Activated B cell treated with CpG ODN at 0.5 μM for 24 hours (primary cell): ENCODE measurements at regions of chr12 and their contacts with region 1.

Region 1: DNA sequence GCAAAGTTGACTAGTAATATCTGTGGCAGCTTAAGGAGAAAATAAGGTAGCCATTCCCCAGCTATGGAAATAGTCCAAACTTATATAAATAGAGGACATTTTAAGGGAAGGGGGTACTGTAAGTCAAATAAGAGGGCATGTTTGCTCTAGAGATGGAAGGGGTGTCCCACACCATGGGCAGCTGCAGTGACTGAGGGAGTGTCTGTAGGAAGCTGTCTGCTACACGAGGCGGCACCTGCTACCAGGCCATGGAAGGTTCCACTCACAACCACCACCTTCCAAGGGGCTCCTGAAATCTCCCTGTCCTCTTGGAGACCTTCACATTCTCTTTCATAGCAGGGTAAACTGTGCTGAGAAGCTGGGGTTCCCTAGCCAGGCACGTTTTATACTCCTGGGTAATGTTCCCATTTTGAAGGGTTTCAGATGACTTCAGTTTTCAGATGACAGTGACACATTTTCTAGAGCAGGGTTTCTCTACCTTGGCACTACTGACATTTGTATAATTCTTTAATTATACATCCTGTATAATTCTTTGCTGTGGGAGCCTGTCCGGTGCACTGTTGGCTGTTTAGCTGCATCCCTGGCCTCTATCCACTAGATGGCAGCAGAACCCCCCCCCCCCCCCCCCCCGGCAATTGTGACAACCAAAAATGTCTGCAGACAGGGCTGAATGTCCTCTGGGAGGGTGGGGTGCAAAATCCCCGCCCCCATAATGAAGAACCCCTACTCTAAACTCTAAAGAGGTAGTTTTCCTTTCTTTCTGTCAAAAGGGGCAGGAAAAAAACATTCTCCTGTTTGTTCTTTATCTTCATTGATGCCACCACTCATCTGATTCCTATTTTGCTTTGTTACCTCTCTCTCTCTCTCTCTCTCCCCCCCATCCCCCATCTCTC is 11.6 kb upstream of the SMCO2 start:
- DNase-seq: no peak
- ATAC-seq: no peak
- H3K4me3 Mint-ChIP-seq: no peak overlapping the region
- H3K27ac Mint-ChIP-seq: no peak overlapping the region
- H3K4me1 Mint-ChIP-seq: peaks cover 20% of the 10 kb centered on the region
- H3K27me3 Mint-ChIP-seq: no peaks in the 10 kb centered on the region
- CTCF ChIP-seq: no peak

Region 2: DNA sequence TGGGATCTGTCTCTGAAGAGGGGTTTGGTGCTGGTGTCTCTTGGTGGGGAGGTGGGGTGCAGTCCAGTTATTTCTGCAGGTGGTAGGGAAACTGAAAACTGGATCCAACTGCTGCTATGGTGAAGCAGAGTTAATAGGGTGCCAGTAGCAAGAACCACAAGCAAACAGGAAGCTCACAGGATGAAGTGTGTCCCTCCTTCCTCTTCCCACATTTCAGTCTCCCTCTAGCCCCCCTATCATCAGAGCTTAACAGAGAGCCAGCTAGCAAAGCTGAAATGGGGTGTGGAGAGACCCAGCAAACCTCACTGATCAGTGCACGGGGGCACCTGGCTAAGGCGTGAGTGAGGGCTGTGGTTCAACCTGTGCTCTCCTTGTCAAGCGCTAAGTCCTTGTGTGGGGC is 283.4 kb before region 1 on chr12:
- CTCF ChIA-PET with region 1: no interaction called
- POLR2A ChIA-PET with region 1: no interaction called
- intact Hi-C with region 1: no loop called
- DNase-seq: no peak
- ATAC-seq: no peak
- H3K4me3 Mint-ChIP-seq: no peak overlapping the region
- H3K27ac Mint-ChIP-seq: no peak overlapping the region
- H3K4me1 Mint-ChIP-seq: peaks cover 3% of the 10 kb centered on the region
- H3K27me3 Mint-ChIP-seq: no peaks in the 10 kb centered on the region
- CTCF ChIP-seq: no peak

Region 3: GRCh38 chr12:27385766-27386564 is 49.0 kb before region 1 on chr12:
- CTCF ChIA-PET with region 1: no interaction called
- POLR2A ChIA-PET with region 1: no interaction called
- intact Hi-C with region 1: no loop called
- DNase-seq: no peak
- ATAC-seq: no peak
- H3K4me3 Mint-ChIP-seq: no peak overlapping the region
- H3K27ac Mint-ChIP-seq: no peak overlapping the region
- H3K4me1 Mint-ChIP-seq: no peaks in the 10 kb centered on the region
- H3K27me3 Mint-ChIP-seq: no peaks in the 10 kb centered on the region
- CTCF ChIP-seq: no peak

Region 4: DNA sequence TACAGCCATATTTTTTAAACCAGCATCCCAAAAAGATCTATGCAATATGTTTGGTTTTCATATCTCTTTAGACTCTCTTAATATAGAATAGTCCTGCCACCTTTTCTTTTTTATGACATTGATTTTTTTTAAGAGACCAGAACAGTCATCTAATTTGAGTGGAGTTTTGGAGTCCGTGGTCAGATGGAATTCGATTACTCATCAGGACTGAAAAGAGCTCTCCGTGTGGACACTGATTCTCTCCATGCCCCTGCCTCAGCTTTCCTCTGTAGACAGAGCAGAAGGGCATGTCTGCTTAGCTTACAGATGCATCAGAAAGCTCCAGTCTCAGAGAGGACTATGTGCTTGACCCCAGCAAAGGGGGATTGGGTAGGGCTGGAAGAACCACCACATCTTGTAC is 39.4 kb after region 1 on chr12:
- CTCF ChIA-PET with region 1: no interaction called
- POLR2A ChIA-PET with region 1: no interaction called
- intact Hi-C with region 1: no loop called
- DNase-seq: no peak
- ATAC-seq: no peak
- H3K4me3 Mint-ChIP-seq: no peak overlapping the region
- H3K27ac Mint-ChIP-seq: no peak overlapping the region
- H3K4me1 Mint-ChIP-seq: no peaks in the 10 kb centered on the region
- H3K27me3 Mint-ChIP-seq: no peaks in the 10 kb centered on the region
- CTCF ChIP-seq: no peak

Region 5: DNA sequence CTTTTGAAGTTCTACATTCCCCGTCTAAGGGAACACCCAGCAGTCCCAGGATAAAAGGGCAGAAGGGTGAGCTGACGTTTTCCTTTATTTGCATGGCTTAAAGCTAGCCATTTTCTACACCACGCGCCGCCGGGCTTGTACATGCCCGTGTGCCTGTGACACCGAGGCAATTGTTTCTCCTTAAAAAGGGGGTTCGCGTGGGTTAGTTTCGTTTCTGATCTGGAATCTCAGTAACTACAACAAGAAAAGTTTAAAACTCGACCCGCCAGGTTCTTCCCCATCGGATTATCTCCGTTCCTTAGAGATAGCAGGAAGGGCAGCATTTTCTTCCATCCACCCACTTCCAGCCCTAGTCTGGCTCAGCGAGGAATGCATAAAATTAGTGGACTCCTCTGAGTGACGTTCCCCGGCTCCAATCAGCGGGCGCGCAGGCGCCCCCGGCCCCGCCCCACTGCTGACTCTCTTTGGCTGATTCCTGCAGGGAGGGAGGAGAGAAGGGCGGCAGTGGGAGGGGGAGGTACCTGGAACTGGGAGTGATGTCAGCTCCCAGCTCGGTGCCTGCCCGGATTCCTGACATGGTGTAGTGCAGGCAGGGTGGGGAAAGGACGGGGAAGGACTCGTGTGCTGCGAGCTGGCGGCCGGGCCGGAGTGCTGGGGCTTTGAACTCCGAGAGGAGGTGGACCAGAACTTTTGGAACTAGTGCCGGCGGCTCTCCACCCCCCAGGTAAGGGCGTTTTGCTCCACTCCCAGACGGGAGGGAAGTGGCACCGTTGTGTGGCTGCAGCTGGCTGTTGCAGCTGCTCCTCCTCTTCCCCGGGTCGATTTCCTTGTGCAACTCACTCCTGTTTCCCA is 88.9 kb after region 1 on chr12 and contains the start of gene PPFIBP1:
- CTCF ChIA-PET with region 1: no interaction called
- POLR2A ChIA-PET with region 1: no interaction called
- intact Hi-C with region 1: loop called (anchors 5 kb)
- DNase-seq: peak; percentile 81
- ATAC-seq: peak; percentile 98
- H3K4me3 Mint-ChIP-seq: peak within 1 kb of the TSS; percentile 96
- H3K27ac Mint-ChIP-seq: peak within 1 kb of the TSS; percentile 93
- H3K4me1 Mint-ChIP-seq: peaks cover 23% of the 10 kb centered on the region
- H3K27me3 Mint-ChIP-seq: peaks cover 3% of the 10 kb centered on the region
- CTCF ChIP-seq: no peak
- total RNA-seq, gene PPFIBP1: 7.2 and 8.1 TPM in 2 replicates

Region 6: GRCh38 chr12:27635349-27635972 is 200.5 kb after region 1 on chr12:
- CTCF ChIA-PET with region 1: interaction called, 19 read pairs
- POLR2A ChIA-PET with region 1: no interaction called
- intact Hi-C with region 1: loop called (anchors 1 kb)
- DNase-seq: no peak
- ATAC-seq: no peak
- H3K4me3 Mint-ChIP-seq: no peak overlapping the region
- H3K27ac Mint-ChIP-seq: no peak overlapping the region
- H3K4me1 Mint-ChIP-seq: no peaks in the 10 kb centered on the region
- H3K27me3 Mint-ChIP-seq: no peaks in the 10 kb centered on the region
- CTCF ChIP-seq: no peak

Region 7: GRCh38 chr12:27652174-27652763 is 217.3 kb after region 1 on chr12:
- CTCF ChIA-PET with region 1: interaction called, 48 read pairs
- POLR2A ChIA-PET with region 1: no interaction called
- intact Hi-C with region 1: loop called (anchors 1 kb)
- DNase-seq: no peak
- ATAC-seq: no peak
- H3K4me3 Mint-ChIP-seq: no peak overlapping the region
- H3K27ac Mint-ChIP-seq: no peak overlapping the region
- H3K4me1 Mint-ChIP-seq: no peaks in the 10 kb centered on the region
- H3K27me3 Mint-ChIP-seq: no peaks in the 10 kb centered on the region
- CTCF ChIP-seq: peak; percentile 71

Region 8: GRCh38 chr12:27703710-27704452 is 269.0 kb after region 1 on chr12:
- CTCF ChIA-PET with region 1: interaction called, 4 read pairs
- POLR2A ChIA-PET with region 1: no interaction called
- intact Hi-C with region 1: loop called (anchors 1 kb)
- DNase-seq: no peak
- ATAC-seq: peak; percentile 92
- H3K4me3 Mint-ChIP-seq: no peak overlapping the region
- H3K27ac Mint-ChIP-seq: no peak overlapping the region
- H3K4me1 Mint-ChIP-seq: no peaks in the 10 kb centered on the region
- H3K27me3 Mint-ChIP-seq: peaks cover 9% of the 10 kb centered on the region
- CTCF ChIP-seq: no peak